Lower leg skin (tissue), 4 donors: ENCODE measurements at regions of chr3 and their contacts with region 1.

Region 1: GRCh38 chr3:166934879-166935278 is 445.2 kb downstream of the ZBBX start:
- DNase-seq: no peak
- H3K4me3 ChIP-seq: no peak overlapping the region
- CTCF ChIP-seq: no peak
- POLR2A ChIP-seq: no peak

Region 2: GRCh38 chr3:167441256-167441655 is 506.4 kb after region 1 on chr3:
- intact Hi-C with region 1: loop called (anchors 5 kb)
- DNase-seq: no peak
- H3K4me3 ChIP-seq: no peak overlapping the region
- CTCF ChIP-seq: no peak
- POLR2A ChIP-seq: no peak

Region 3: DNA sequence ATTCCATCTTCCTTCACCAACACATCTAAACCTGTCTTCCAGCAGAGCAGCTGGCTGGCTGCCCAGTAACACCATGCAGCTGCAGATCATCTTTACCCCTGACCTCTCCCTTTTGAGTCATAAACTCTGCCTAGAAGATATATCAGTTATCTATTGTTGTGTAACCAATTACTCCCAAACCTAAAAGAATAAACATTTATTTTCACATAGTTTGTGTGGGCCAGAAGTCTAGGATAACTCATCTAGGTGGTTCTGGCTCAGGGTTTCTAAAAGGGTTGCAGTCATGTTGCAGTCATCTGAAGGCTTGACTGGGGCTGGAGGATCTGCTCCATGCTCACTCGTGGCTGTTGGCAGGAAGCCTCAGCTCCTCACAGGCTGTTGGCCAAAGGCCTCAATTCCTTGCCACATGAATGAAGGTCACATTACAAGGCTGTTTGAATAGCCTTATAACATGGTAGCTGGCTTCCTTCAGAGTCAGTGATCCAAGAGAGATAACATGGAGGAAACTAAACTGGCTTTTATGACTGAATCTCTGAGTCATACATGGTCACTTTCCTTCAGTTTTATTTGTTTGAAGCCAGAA is 1068.0 kb after region 1 on chr3:
- intact Hi-C with region 1: no loop called
- DNase-seq: no peak
- H3K4me3 ChIP-seq: no peak overlapping the region
- CTCF ChIP-seq: no peak
- POLR2A ChIP-seq: no peak